ENCODE measurements at regions of chr12 and their contacts with region 1.

Region 1: GRCh38 chr12:98593351-98594049 is at the start of gene SLC25A3:
- DNase-seq: peak; percentile 94
- H3K4me3 Mint-ChIP-seq: peak within 1 kb of the TSS; percentile 93
- H3K27ac Mint-ChIP-seq: peak within 1 kb of the TSS; percentile 96
- H3K4me1 Mint-ChIP-seq: peaks cover 22% of the 10 kb centered on the region
- H3K27me3 Mint-ChIP-seq: no peaks in the 10 kb centered on the region
- total RNA-seq, gene SLC25A3: 714 to 732 TPM

Region 2: DNA sequence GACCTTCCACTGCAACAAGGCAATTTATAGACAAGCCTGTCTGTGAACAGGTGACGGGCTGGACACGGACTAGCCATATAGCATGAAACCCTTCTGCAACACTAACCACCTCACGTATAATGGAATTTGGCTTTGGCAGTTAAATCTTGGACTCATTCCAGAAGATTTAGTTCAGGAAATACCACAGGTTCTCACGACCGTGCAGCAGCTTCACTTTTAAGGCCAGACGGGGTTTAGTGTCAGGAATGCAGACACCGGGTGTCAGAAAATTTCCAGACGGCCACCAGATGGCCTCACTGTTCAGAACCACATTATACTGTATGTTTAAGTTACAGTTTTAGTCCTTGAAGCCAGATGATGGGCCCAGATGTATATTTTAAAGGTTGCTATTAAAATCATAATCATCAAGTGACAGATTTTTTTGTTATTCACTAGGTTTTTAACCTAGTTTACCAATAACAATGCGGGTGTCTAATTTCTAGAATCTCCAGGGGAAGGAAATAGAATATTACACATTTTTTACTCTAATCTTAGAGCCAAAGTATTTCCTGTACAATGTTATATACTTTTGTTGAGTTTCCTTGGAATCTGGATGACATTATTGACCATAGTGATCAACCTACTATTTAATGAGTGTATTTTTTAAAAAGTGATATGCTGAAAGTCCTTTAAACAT is 168.6 kb before region 1 on chr12:
- CTCF ChIA-PET with region 1: no interaction called
- intact Hi-C with region 1: loop called (anchors 2 kb)
- DNase-seq: peak; percentile 76
- H3K4me3 Mint-ChIP-seq: no peak overlapping the region
- H3K27ac Mint-ChIP-seq: no peak overlapping the region
- H3K4me1 Mint-ChIP-seq: peaks cover 4% of the 10 kb centered on the region
- H3K27me3 Mint-ChIP-seq: no peaks in the 10 kb centered on the region

Region 3: GRCh38 chr12:98516184-98516873 is 77.2 kb before region 1 on chr12:
- CTCF ChIA-PET with region 1: no interaction called
- intact Hi-C with region 1: loop called (anchors 1 kb)
- DNase-seq: peak; percentile 96
- H3K4me3 Mint-ChIP-seq: peak overlapping the region; percentile 92
- H3K27ac Mint-ChIP-seq: peak overlapping the region; percentile 99
- H3K4me1 Mint-ChIP-seq: peaks cover 37% of the 10 kb centered on the region
- H3K27me3 Mint-ChIP-seq: no peaks in the 10 kb centered on the region

Region 4: GRCh38 chr12:98644711-98645402 is 51.4 kb after region 1 on chr12 and contains the starts of genes APAF1 and IKBIP:
- CTCF ChIA-PET with region 1: interaction called, 4 read pairs
- intact Hi-C with region 1: loop called (anchors 1 kb)
- DNase-seq: peak; percentile 97
- H3K4me3 Mint-ChIP-seq: peak within 1 kb of the TSS; percentile 96
- H3K27ac Mint-ChIP-seq: peak within 1 kb of the TSS; percentile 95
- H3K4me1 Mint-ChIP-seq: peaks cover 24% of the 10 kb centered on the region
- H3K27me3 Mint-ChIP-seq: no peaks in the 10 kb centered on the region
- total RNA-seq, gene APAF1: 13.6 to 14.5 TPM
- total RNA-seq, gene IKBIP: 14.5 to 16.8 TPM

Region 5: GRCh38 chr12:100142851-100143559 is 1549.5 kb after region 1 on chr12 and contains the start of gene BLTP3B:
- CTCF ChIA-PET with region 1: no interaction called
- intact Hi-C with region 1: loop called (anchors 1 kb)
- DNase-seq: peak; percentile 93
- H3K4me3 Mint-ChIP-seq: peak within 1 kb of the TSS; percentile 91
- H3K27ac Mint-ChIP-seq: peak within 1 kb of the TSS; percentile 97
- H3K4me1 Mint-ChIP-seq: peaks cover 36% of the 10 kb centered on the region
- H3K27me3 Mint-ChIP-seq: no peaks in the 10 kb centered on the region
- total RNA-seq, gene BLTP3B: 27.0 to 27.2 TPM